ENCODE measurements at regions of chr2 and their contacts with region 1.

Region 1: DNA sequence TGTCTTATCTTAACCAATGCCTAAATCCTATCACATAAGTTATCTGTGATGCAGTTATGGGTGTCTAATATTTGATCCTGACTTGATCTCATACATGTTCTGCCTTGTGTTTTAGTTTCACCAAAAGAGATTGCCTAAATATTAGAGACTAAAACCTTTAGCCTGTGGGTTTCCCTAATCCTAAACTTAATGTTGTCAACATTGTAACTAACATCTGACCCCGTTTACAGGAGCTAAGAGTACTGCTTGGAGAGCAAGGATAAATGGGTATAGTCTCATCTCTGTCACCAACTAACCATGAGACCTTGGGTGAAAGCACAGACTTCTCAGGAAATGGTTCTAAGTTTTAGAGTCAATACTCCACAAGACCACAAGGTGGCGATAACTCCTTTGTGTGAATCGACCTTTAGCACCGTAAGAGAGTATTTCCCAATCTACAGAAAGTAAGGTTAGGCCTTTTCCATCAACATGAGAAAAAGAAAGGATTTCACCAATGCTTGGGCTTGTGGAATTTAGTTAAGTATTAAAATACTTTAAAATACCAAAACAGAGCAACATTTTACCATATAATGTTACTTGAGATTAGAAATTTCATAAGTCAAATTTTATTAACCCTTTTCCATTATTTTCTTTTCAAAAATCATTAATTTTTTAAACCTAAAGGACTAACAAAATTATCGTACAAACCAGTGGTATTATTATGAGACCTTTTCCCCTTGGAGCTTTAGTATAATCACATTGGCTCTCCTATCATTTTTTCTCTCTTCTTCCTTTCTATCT is 60.5 kb downstream of the G6PC2 start:
- DNase-seq: peak; percentile 80

Region 2: DNA sequence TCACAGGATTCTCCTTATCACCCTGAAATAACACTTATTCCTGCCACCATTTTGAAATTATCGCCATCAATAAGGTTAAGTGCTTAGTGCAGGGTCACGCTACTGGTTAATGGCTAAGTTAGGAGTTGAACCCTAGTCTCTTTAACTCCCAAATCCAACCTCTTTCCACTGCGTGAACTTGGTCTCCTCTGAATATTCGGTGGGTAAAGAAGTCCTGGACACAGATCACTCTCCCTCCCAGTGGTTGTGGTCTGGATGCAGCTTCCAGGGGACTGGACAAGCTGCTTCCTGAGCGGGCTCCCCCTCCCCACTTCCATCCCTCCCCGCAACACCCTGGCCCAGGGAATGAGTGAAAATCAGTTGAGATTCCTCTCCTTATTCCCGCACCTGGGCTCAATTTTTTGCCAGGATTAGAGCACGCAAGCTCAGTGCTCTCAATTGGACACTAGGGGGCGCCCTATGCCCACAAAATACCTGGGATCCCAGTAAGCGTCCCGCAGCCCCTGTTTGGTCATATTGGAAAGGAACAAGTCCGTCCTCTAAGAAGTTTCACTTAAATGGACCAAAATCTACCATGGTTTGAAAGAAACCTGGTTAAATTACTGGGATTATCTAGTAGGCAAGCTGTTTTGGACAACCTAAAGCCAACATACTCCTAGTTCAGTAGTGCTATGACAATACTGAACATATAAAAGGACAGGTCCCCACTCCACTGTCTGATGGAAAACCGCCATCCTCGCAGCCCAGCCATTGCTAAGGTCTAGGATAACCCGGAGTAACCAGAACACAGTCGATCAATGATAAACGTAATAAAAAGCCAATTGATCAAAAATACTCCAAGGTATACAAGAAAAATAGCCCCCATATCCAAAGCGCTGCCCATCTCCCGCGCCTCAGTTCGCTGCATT is 148.1 kb after region 1 on chr2:
- in situ Hi-C with region 1: loop called (anchors 25 kb)
- DNase-seq: peak; percentile 72